ENCODE measurements at regions of chrX and their contacts with region 1.

Region 1: GRCh38 chrX:23901805-23902204 is 5.9 kb downstream of the APOO start:
- DNase-seq: peak; percentile 72
- H3K4me3 ChIP-seq: no peak overlapping the region
- H3K27ac ChIP-seq: peak overlapping the region; percentile 87
- H3K4me1 ChIP-seq: peaks cover 44% of the 10 kb centered on the region
- H3K27me3 ChIP-seq: no peaks in the 10 kb centered on the region
- CTCF ChIP-seq: peak; percentile 55 to 77

Region 2: GRCh38 chrX:23403853-23404252 is 498.0 kb before region 1 on chrX:
- CTCF ChIA-PET with region 1: no interaction called
- dilution Hi-C with region 1: no loop called
- in situ Hi-C with region 1: no loop called
- intact Hi-C with region 1: loop called (anchors 5 kb)
- DNase-seq: no peak
- H3K4me3 ChIP-seq: no peak overlapping the region
- H3K27ac ChIP-seq: no peak overlapping the region
- H3K4me1 ChIP-seq: no peaks in the 10 kb centered on the region
- H3K27me3 ChIP-seq: peaks cover 5% of the 10 kb centered on the region
- CTCF ChIP-seq: peak; percentile 31 to 53

Region 3: DNA sequence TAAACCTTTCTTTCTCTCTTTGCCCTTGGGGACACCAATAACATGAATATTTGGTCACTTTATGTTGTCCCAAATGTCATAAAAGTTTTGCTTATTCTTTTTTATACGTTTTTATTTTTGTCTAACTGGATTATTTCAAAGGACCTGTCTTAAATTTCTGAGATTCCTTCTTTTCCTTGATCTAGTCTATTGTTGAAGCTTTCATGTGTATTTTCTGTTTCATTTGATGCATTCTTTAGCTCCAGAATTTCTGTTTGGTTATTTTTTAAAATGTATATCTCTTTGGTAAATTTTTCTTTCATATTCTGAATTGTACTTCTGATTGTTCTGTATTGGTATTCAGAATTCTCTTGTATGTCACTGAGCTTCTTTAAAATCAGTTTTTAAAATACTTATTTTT is 478.9 kb before region 1 on chrX:
- CTCF ChIA-PET with region 1: no interaction called
- dilution Hi-C with region 1: no loop called
- in situ Hi-C with region 1: no loop called
- intact Hi-C with region 1: no loop called
- DNase-seq: no peak
- H3K4me3 ChIP-seq: no peak overlapping the region
- H3K27ac ChIP-seq: no peak overlapping the region
- H3K4me1 ChIP-seq: no peaks in the 10 kb centered on the region
- H3K27me3 ChIP-seq: no peaks in the 10 kb centered on the region
- CTCF ChIP-seq: no peak

Region 4: DNA sequence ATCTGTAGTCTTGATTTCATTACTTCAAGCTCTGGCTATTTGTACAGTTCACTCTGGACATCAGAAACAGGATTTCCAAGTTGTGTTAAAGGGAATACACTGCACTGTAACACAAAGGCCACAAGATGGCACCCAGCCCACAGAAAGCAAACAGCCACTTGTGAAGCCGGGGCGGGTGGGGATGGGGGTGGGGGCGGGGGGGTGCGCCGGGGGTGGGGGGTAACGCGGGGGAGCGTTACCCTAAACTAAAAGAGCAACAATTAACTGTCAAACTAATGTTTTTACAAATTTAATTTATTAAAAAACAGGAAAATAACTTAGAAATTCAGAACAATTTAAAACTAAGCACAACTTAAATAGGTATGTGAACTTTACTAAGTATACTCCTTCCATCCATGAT is 207.2 kb before region 1 on chrX:
- CTCF ChIA-PET with region 1: no interaction called
- dilution Hi-C with region 1: no loop called
- in situ Hi-C with region 1: loop called (anchors 5 to 10 kb)
- intact Hi-C with region 1: no loop called
- DNase-seq: peak; percentile 30
- H3K4me3 ChIP-seq: no peak overlapping the region
- H3K27ac ChIP-seq: no peak overlapping the region
- H3K4me1 ChIP-seq: no peaks in the 10 kb centered on the region
- H3K27me3 ChIP-seq: no peaks in the 10 kb centered on the region
- CTCF ChIP-seq: peak; percentile 53 to 61

Region 5: GRCh38 chrX:23756157-23756559 is 145.6 kb before region 1 on chrX:
- CTCF ChIA-PET with region 1: no interaction called
- dilution Hi-C with region 1: no loop called
- in situ Hi-C with region 1: loop called in 1 of 2 experiments (anchors 10 kb)
- intact Hi-C with region 1: loop called (anchors 1 kb)
- DNase-seq: peak; percentile 37
- H3K4me3 ChIP-seq: no peak overlapping the region
- H3K27ac ChIP-seq: no peak overlapping the region
- H3K4me1 ChIP-seq: no peaks in the 10 kb centered on the region
- H3K27me3 ChIP-seq: no peaks in the 10 kb centered on the region
- CTCF ChIP-seq: peak; percentile 58 to 66

Region 6: GRCh38 chrX:23797371-23798128 is 104.3 kb before region 1 on chrX:
- CTCF ChIA-PET with region 1: no interaction called
- dilution Hi-C with region 1: loop called (anchors 5 kb)
- in situ Hi-C with region 1: no loop called
- intact Hi-C with region 1: no loop called
- DNase-seq: peak; percentile 81
- H3K4me3 ChIP-seq: no peak overlapping the region
- H3K27ac ChIP-seq: peak overlapping the region; percentile 42
- H3K4me1 ChIP-seq: peaks cover 26% of the 10 kb centered on the region
- H3K27me3 ChIP-seq: no peaks in the 10 kb centered on the region
- CTCF ChIP-seq: peak in 1 of 2 donors; percentile 21

Region 7: GRCh38 chrX:23871905-23872546 is 29.8 kb before region 1 on chrX:
- CTCF ChIA-PET with region 1: no interaction called
- dilution Hi-C with region 1: no loop called
- in situ Hi-C with region 1: no loop called
- intact Hi-C with region 1: no loop called
- DNase-seq: no peak
- H3K4me3 ChIP-seq: no peak overlapping the region
- H3K27ac ChIP-seq: no peak overlapping the region
- H3K4me1 ChIP-seq: no peaks in the 10 kb centered on the region
- H3K27me3 ChIP-seq: peaks cover 3% of the 10 kb centered on the region
- CTCF ChIP-seq: no peak

Region 8: GRCh38 chrX:23945206-23945605 is 43.4 kb after region 1 on chrX:
- CTCF ChIA-PET with region 1: no interaction called
- dilution Hi-C with region 1: no loop called
- in situ Hi-C with region 1: no loop called
- intact Hi-C with region 1: no loop called
- DNase-seq: no peak
- H3K4me3 ChIP-seq: no peak overlapping the region
- H3K27ac ChIP-seq: no peak overlapping the region
- H3K4me1 ChIP-seq: no peaks in the 10 kb centered on the region
- H3K27me3 ChIP-seq: peaks cover 2% of the 10 kb centered on the region
- CTCF ChIP-seq: no peak

Region 9: DNA sequence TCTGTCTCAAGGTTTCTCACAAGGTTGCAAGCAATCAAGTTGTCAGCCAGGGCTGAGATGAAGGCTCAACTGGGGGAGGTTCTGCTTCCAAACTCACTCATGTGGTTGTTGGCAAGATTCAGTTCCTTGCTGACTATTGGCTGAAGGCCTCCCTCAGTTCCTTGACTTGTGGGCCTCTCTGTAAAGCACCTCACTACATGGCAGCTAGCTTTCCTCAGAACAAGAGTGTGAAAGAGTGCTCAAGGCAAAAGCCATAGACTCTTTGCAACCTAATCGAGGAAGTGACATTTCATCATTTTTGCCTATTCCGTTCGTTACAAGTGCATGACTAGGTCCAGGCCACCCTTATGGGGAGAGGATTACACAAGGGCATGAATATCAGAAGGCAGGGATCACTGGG is 58.0 kb after region 1 on chrX:
- CTCF ChIA-PET with region 1: no interaction called
- dilution Hi-C with region 1: no loop called
- in situ Hi-C with region 1: no loop called
- intact Hi-C with region 1: no loop called
- DNase-seq: no peak
- H3K4me3 ChIP-seq: no peak overlapping the region
- H3K27ac ChIP-seq: no peak overlapping the region
- H3K4me1 ChIP-seq: no peaks in the 10 kb centered on the region
- H3K27me3 ChIP-seq: no peaks in the 10 kb centered on the region
- CTCF ChIP-seq: no peak